ENCODE measurements at regions of chr1 and their contacts with region 1.

Region 1: DNA sequence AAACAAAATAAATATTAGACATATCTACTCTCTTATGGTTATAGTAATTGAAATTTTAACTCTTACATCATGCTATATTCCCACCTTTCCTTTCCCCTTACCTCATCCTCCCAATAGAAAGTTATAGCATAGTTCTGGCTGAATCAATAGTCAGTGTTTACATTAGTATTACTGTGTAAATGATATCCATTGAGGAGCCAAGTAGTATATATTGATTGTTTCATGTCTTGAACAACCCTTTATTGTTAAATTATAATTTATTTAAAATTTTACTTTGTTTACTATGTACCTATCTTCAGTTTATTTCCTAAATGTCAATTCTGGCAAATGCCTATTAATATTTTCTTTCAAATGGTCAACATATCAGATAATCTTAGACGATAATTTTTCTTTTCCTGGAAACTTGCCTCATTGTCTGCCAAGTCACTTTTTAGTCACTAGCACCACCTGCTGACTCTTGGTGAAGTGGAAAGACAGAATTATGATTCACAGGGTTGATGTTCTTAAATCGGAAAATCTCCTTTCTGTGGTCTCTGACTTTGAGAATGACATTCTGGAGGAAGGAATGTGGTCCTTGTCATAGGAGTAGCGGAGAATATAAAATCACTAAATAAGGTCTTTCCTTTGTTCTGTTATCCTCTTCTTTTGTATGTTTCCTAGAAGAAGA is 8.7 kb downstream of the HJV start:
- DNase-seq: no peak
- ATAC-seq: peak; percentile 53 to 78 (median 67)
- H3K4me3 ChIP-seq: no peak overlapping the region
- H3K27ac ChIP-seq: peak overlapping the region; percentile 26
- H3K4me1 ChIP-seq: peaks cover 24% of the 10 kb centered on the region
- H3K27me3 ChIP-seq: no peaks in the 10 kb centered on the region
- CTCF ChIP-seq: peak; percentile 73

Region 2: DNA sequence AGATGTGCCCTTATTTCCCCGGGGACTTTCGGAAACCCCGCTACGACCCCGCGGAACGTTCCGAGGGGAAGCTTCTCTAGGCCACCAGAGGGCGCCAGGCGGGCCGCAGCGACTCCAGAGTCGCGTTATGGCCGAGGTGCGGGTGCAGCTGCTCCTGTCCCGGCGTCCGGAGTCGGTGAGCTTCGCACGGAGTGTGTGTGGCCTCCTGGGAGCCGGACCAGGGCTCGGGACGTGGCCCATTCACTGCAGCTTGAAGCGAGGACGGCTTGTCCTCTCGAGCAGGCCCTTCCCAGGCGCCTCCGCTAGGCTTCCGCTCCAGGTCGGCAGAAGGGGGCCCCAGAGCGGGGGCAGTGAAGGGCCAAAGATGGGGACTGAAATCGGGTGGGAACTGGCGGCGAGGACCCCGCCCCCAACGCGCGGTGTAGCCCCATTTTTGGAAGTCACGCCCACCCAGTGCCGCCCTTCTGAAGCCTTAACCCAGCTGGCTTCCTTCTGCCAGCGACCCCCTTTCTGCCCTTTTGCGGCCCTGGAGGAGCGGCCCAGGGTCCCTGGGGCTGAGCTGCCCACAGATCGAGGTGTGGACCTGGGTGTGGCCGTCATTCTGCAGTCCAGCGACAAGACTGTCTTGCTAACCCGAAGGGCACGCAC is 167.2 kb before region 1 on chr1 and contains the start of gene NUDT17:
- intact Hi-C with region 1: loop called (anchors 1 to 5 kb)
- DNase-seq: peak; percentile 84 to 92
- ATAC-seq: peak; percentile 87 to 94 (median 90)
- H3K4me3 ChIP-seq: peak within 1 kb of the TSS; percentile 78
- H3K27ac ChIP-seq: peak within 1 kb of the TSS; percentile 78
- H3K4me1 ChIP-seq: peaks cover 10% of the 10 kb centered on the region
- H3K27me3 ChIP-seq: no peaks in the 10 kb centered on the region
- CTCF ChIP-seq: peak; percentile 92
- total RNA-seq, gene NUDT17: 1.4 to 2.9 (median 1.7) TPM

Region 3: GRCh38 chr1:145918144-145918992 is 94.5 kb before region 1 on chr1 and contains the start of gene PEX11B:
- intact Hi-C with region 1: loop called (anchors 5 kb)
- DNase-seq: peak; percentile 89 to 93
- ATAC-seq: peak; percentile 88 to 94 (median 90)
- H3K4me3 ChIP-seq: peak within 1 kb of the TSS; percentile 98
- H3K27ac ChIP-seq: peak within 1 kb of the TSS; percentile 88
- H3K4me1 ChIP-seq: peaks cover 21% of the 10 kb centered on the region
- H3K27me3 ChIP-seq: no peaks in the 10 kb centered on the region
- CTCF ChIP-seq: no peak
- total RNA-seq, gene PEX11B: 19.3 to 36.3 (median 23.1) TPM

Region 4: DNA sequence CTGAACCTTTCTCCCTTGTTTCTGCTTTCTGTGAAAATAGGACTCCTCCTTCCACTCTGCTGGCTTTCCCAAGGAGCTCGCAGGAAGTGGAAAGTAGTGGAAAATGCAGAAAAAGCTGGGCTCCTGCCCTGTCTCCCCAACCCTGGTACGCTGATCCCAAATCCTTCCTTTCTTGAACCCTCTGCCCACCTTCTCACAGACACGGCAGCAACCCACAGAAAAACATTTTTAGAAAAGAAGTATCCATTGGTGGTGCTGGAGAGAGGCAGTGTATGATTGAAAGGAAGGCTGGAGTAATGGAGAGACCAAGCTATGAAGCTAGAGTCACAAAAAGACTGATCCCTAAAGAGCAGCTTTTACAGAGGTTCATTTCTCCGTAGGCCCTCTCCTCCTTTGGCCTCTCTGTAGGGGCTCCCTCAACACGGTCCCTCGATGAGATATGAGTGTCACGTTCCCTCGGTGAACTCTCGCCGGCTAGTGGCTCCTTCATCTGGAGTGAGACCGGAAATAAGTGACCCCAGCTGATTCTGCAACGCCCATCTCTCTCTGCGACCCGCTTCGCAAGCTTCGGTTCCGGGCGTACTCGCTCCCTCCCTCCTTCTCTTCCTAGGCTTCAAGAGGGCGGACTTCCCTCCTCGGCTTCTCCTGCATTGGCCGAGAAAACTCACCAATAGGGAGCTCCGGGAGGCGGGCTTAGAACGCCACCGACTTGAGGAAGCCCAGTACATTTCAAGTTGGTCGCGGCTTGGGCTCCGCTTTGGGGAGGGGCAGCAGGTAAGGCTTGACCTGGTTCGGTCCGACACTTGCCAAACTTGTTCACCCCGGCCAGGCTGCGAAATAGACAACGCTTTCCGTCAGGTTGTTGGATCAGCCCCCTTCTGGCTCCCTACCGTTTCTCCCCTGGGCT is 48.6 kb before region 1 on chr1 and contains the starts of genes ANKRD34A and POLR3GL:
- intact Hi-C with region 1: no loop called
- DNase-seq: peak; percentile 95 to 97
- ATAC-seq: peak; percentile 77 to 82 (median 78)
- H3K4me3 ChIP-seq: peak within 1 kb of the TSS; percentile 85
- H3K27ac ChIP-seq: peak within 1 kb of the TSS; percentile 86
- H3K4me1 ChIP-seq: peaks cover 42% of the 10 kb centered on the region
- H3K27me3 ChIP-seq: no peaks in the 10 kb centered on the region
- CTCF ChIP-seq: no peak
- total RNA-seq, gene ANKRD34A: 0.42 to 12.3 (median 4.9) TPM
- total RNA-seq, gene POLR3GL: 30.5 to 62.5 (median 48.9) TPM